H1 (cell line): ENCODE measurements at regions of chr16 and their contacts with region 1.

Region 1: GRCh38 chr16:10876799-10877341 is at the start of gene CIITA:
- DNase-seq: no peak
- H3K4me3 ChIP-seq: no peak within 1 kb of the TSS
- H3K27ac ChIP-seq: no peak within 1 kb of the TSS
- H3K4me1 ChIP-seq: peaks cover 0 to 9% (median 1%) of the 10 kb centered on the region in 4 experiments; a peak in 3 of 7 replicates
- H3K27me3 ChIP-seq: peaks cover 4 to 33% (median 28%) of the 10 kb centered on the region in 4 experiments
- CTCF ChIP-seq: no peak
- EP300 ChIP-seq: no peak
- POLR2A ChIP-seq: no peak
- RAD21 ChIP-seq: no peak
- total RNA-seq, gene CIITA: 0.06 and 0.07 TPM in 2 replicates

Region 2: DNA sequence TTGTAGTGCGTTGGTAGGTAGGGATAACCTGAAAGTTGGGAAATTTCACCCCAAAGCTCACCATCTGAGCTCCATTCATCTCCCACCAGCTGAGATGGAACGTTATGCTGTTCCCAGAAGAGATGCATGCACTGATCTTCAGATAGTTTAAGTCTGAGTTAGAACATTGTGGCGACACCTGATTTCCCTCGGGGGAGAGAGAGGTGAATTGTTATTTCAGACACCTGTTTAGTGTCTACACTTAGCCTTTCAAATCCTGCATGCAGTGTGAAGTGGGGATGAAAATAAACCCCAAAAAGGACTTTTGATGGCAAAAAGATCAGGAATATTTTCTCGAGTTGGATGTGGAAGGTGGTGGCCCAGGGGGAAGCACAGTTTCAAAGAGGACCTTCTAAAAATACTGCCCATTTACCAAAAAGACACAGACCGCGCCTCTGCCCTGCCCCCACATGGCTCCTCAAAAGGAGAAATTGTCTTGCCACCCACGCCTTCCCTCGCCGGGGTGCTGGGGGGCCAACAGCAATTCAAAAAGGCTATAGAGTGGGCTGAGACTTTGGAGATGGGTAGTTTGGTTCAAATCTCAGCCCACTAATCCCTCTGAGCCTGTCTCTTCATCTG is 11.6 kb after region 1 on chr16:
- CTCF ChIA-PET with region 1: interaction called, 13 read pairs
- POLR2A ChIA-PET with region 1: interaction called, 3 read pairs
- DNase-seq: no peak
- H3K4me3 ChIP-seq: no peak overlapping the region
- H3K27ac ChIP-seq: no peak overlapping the region
- H3K4me1 ChIP-seq: no peaks in the 10 kb centered on the region
- H3K27me3 ChIP-seq: no peaks in the 10 kb centered on the region
- CTCF ChIP-seq: no peak
- EP300 ChIP-seq: no peak
- POLR2A ChIP-seq: no peak
- RAD21 ChIP-seq: no peak

Region 3: GRCh38 chr16:10895053-10895946 is 18.4 kb after region 1 on chr16:
- CTCF ChIA-PET with region 1: interaction called, 13 read pairs
- POLR2A ChIA-PET with region 1: no interaction called
- DNase-seq: peak; percentile 38 to 92
- H3K4me3 ChIP-seq: no peak overlapping the region
- H3K27ac ChIP-seq: no peak overlapping the region
- H3K4me1 ChIP-seq: peaks cover 0 to 3% (median 0%) of the 10 kb centered on the region in 4 experiments; a peak in 2 of 7 replicates
- H3K27me3 ChIP-seq: no peaks in the 10 kb centered on the region; a peak in 1 of 7 replicates
- CTCF ChIP-seq: no peak
- EP300 ChIP-seq: 0 out of 3 replicates have a peak, but pooled peaks of 1 of the 2 experiments have one; percentile 14
- POLR2A ChIP-seq: no peak
- RAD21 ChIP-seq: no peak